A549 (cell line): ENCODE measurements at regions of chr1 and their contacts with region 1.

Region 1: GRCh38 chr1:109984456-109985275 is at the start of gene AHCYL1:
- DNase-seq: peak; percentile 92 to 97
- ATAC-seq: peak; percentile 84 to 89
- H3K4me3 ChIP-seq: peak within 1 kb of the TSS; percentile 89
- H3K27ac ChIP-seq: peak within 1 kb of the TSS; percentile 95 to 98
- H3K4me1 ChIP-seq: peaks cover 72% of the 10 kb centered on the region
- CTCF ChIP-seq: peak; percentile 86
- EP300 ChIP-seq: no peak
- POLR2A ChIP-seq: peak; percentile 77
- RAD21 ChIP-seq: peak; percentile 97 to 99
- polyA plus RNA-seq, gene AHCYL1: 147 and 148 TPM in 2 replicates

Region 2: DNA sequence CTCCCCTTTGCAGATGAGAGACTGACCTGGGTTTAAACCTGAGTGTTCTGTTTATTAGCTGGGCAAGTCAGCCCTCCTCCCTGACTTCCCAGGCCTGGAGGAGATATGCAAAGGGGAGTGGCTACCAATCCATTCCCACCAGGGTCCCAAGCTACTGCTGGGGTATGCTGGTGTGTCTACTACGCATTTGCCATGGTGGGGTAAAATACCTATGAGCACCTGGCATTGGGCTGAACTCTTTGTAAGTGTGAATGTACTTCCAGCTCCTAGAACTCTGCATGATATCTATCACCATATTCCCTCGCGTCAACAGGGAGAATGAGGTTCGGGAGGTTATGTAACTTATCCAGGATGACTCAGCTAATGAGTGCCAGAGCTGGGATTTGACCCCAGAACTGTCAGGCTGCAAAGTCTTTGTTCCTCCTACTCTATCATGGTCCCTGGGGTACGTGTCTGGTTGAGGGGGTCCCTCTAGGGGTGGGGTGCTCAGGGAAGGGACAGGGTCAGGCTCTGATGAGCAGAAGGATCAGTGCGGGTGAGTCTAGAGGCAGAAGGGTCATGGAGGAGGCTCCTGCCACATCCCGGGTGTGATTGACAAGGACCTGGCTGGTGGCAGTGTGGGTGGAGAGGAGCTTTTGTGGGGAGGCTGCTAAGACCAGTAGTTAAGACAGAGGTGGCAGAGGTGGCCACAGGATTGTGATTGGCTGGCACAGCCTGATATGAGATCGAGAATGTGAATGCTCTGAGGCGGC is 348.3 kb before region 1 on chr1:
- CTCF ChIA-PET with region 1: interaction called, 53 read pairs
- POLR2A ChIA-PET with region 1: interaction called, 3 read pairs
- DNase-seq: peak in 1 of 2 experiments; percentile 34
- ATAC-seq: peak; percentile 35 to 59; a peak in 5 of 6 replicates
- H3K4me3 ChIP-seq: no peak overlapping the region
- H3K27ac ChIP-seq: peak overlapping the region; percentile 53 to 78
- H3K4me1 ChIP-seq: peaks cover 27% of the 10 kb centered on the region
- CTCF ChIP-seq: no peak
- EP300 ChIP-seq: no peak
- POLR2A ChIP-seq: no peak
- RAD21 ChIP-seq: no peak

Region 3: GRCh38 chr1:109762821-109763645 is 221.6 kb before region 1 on chr1:
- CTCF ChIA-PET with region 1: interaction called, 969 read pairs
- POLR2A ChIA-PET with region 1: no interaction called
- DNase-seq: no peak
- ATAC-seq: no peak
- H3K4me3 ChIP-seq: peak overlapping the region; percentile 23; the same call in 1 of the 3 replicates
- H3K27ac ChIP-seq: peak overlapping the region; percentile 70 to 79
- H3K4me1 ChIP-seq: peaks cover 18% of the 10 kb centered on the region
- CTCF ChIP-seq: no peak
- EP300 ChIP-seq: no peak
- POLR2A ChIP-seq: no peak
- RAD21 ChIP-seq: no peak

Region 4: DNA sequence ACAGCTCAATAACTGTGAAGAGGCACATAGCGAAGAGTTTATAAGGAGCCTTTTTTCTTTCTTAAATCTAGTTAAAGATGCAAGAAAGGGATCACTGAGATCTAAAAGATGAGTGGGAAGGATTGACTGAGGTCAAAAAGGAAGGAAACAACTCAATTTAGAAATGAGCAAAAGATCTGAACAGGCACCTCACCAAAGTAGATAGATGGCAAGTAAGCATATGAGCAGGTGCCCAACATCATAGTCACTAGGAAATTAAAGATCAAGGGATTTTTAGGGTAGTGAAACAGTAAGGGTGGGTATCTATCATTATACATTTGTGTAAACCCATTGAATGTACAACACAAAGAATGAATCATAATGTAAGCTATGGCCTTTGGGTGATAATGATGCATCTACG is 118.6 kb before region 1 on chr1:
- CTCF ChIA-PET with region 1: interaction called, 27 read pairs
- POLR2A ChIA-PET with region 1: no interaction called
- DNase-seq: no peak
- ATAC-seq: no peak
- H3K4me3 ChIP-seq: no peak overlapping the region
- H3K27ac ChIP-seq: no peak overlapping the region
- H3K4me1 ChIP-seq: no peaks in the 10 kb centered on the region
- CTCF ChIP-seq: no peak
- EP300 ChIP-seq: no peak
- POLR2A ChIP-seq: no peak
- RAD21 ChIP-seq: no peak

Region 5: DNA sequence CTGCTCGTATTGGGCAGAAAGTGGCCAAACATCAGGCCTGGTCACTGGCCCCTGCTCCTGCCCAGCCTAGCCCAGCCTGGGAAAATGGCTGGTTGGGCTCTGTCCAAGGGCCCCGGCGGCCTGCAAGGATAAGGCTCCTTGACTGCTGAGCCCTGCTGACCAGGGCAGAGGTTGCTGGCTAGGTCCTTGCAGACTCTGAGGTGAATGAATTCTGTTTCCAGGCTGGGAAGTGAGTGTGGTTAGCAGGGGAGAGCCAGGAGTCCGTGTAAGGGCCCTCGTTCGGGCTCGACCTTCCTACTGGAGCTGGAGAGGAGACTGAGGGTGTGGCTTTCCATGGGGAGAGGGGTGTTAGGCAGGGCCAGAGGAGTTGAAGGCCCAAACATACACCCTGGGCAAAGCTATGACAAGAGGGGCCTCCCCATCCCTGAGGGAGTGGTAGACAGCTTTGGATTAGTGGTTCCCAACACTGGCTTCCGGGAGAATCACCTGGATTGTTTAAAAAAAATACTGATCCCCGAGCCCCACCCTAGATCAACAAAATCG is 53.4 kb before region 1 on chr1:
- CTCF ChIA-PET with region 1: interaction called, 33 read pairs
- POLR2A ChIA-PET with region 1: interaction called, 3 read pairs
- DNase-seq: peak; percentile 41 to 80
- ATAC-seq: peak; percentile 77
- H3K4me3 ChIP-seq: no peak overlapping the region
- H3K27ac ChIP-seq: peak overlapping the region; percentile 79 to 88
- H3K4me1 ChIP-seq: peaks cover 78% of the 10 kb centered on the region
- CTCF ChIP-seq: no peak
- EP300 ChIP-seq: no peak
- POLR2A ChIP-seq: no peak
- RAD21 ChIP-seq: no peak; a peak in 1 of 5 replicates

Region 6: GRCh38 chr1:110011527-110012041 is 26.9 kb after region 1 on chr1:
- CTCF ChIA-PET with region 1: interaction called, 46 read pairs
- POLR2A ChIA-PET with region 1: interaction called, 3 read pairs
- DNase-seq: peak; percentile 56 to 61
- ATAC-seq: peak; percentile 92 to 97
- H3K4me3 ChIP-seq: no peak overlapping the region
- H3K27ac ChIP-seq: 0 out of 6 replicates have a peak overlapping the region, but pooled peaks of 1 of the 2 experiments have one; percentile 3
- H3K4me1 ChIP-seq: peaks cover 17% of the 10 kb centered on the region
- CTCF ChIP-seq: peak; percentile 53
- EP300 ChIP-seq: no peak
- POLR2A ChIP-seq: no peak
- RAD21 ChIP-seq: peak; percentile 59 to 65